ENCODE measurements at regions of chr13 and their contacts with region 1.

Region 1: DNA sequence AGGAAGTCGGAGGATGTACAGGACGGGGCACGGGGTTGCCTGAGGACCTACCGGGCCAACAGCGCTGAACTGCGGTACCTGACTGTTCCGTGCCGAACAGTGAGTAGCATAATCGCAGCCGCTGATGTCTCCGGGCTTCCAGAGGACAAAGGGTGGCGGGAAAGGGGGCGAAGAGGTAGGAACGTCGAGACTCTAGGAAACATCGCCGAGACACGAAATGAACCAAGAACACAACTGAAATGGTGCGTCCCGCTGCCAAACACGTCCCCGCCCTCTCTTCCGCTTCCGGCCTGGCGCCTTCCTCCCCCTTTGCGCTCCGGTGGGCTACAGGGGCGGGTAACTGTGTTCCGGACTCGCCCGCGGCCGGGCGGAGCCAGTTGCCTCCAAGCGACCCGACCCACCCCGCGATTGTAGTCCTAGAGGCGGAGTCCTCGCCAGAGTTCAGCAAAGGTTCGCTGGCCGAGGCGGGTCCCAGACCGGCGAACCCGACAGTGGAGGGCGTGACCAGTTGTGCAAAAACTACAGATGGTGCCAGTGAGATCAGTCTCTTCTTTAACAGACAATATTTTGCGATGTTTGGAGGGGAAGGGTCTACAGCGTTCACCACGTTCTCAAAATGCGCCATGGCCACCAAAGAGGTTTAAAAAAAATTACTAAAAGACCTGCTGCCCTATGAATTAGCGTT is at the start of gene MRPS31:
- DNase-seq: peak; percentile 88 to 98 (median 95)
- ATAC-seq: peak; percentile 94
- H3K4me3 ChIP-seq: peak within 1 kb of the TSS; percentile 89 to 92
- H3K4me3 Mint-ChIP-seq: peak within 1 kb of the TSS; percentile 99
- H3K27ac ChIP-seq: peak within 1 kb of the TSS; percentile 74 to 87
- H3K27ac Mint-ChIP-seq: peak within 1 kb of the TSS; percentile 98
- H3K4me1 ChIP-seq: peaks cover 20% of the 10 kb centered on the region
- H3K4me1 Mint-ChIP-seq: peaks cover 41% of the 10 kb centered on the region
- H3K27me3 ChIP-seq: no peaks in the 10 kb centered on the region
- H3K27me3 Mint-ChIP-seq: no peaks in the 10 kb centered on the region
- CTCF ChIP-seq: no peak
- total RNA-seq, gene MRPS31: 7.3 to 7.5 TPM

Region 2: GRCh38 chr13:40485611-40486517 is 285.2 kb before region 1 on chr13:
- CTCF ChIA-PET with region 1: no interaction called
- POLR2A ChIA-PET with region 1: no interaction called
- intact Hi-C with region 1: loop called in 1 of 2 experiments (anchors 5 kb)
- DNase-seq: peak; percentile 49 to 94 (median 73)
- ATAC-seq: peak; percentile 92
- H3K4me3 ChIP-seq: peak overlapping the region in 1 of 2 experiments; percentile 33
- H3K4me3 Mint-ChIP-seq: peak overlapping the region; percentile 43
- H3K27ac ChIP-seq: peak overlapping the region; percentile 53 to 61
- H3K27ac Mint-ChIP-seq: peak overlapping the region; percentile 93
- H3K4me1 ChIP-seq: peaks cover 92% of the 10 kb centered on the region
- H3K4me1 Mint-ChIP-seq: peaks cover 91% of the 10 kb centered on the region
- H3K27me3 ChIP-seq: no peaks in the 10 kb centered on the region
- H3K27me3 Mint-ChIP-seq: no peaks in the 10 kb centered on the region
- CTCF ChIP-seq: no peak

Region 3: GRCh38 chr13:40789275-40790133 is 18.4 kb after region 1 on chr13 and contains the start of gene SLC25A15:
- CTCF ChIA-PET with region 1: no interaction called
- POLR2A ChIA-PET with region 1: interaction called, 15 read pairs
- intact Hi-C with region 1: loop called (anchors 1 kb)
- DNase-seq: peak; percentile 37 to 87 (median 71)
- ATAC-seq: peak; percentile 86
- H3K4me3 ChIP-seq: peak within 1 kb of the TSS; percentile 63 to 74
- H3K4me3 Mint-ChIP-seq: peak within 1 kb of the TSS; percentile 84
- H3K27ac ChIP-seq: peak within 1 kb of the TSS; percentile 70 to 74
- H3K27ac Mint-ChIP-seq: peak within 1 kb of the TSS; percentile 82
- H3K4me1 ChIP-seq: peaks cover 15% of the 10 kb centered on the region
- H3K4me1 Mint-ChIP-seq: peaks cover 37% of the 10 kb centered on the region
- H3K27me3 ChIP-seq: no peaks in the 10 kb centered on the region
- H3K27me3 Mint-ChIP-seq: no peaks in the 10 kb centered on the region
- CTCF ChIP-seq: no peak
- total RNA-seq, gene SLC25A15: 5.0 to 7.5 TPM

Region 4: GRCh38 chr13:40927929-40928328 is 156.9 kb after region 1 on chr13:
- CTCF ChIA-PET with region 1: no interaction called
- POLR2A ChIA-PET with region 1: no interaction called
- intact Hi-C with region 1: no loop called
- DNase-seq: no peak
- ATAC-seq: no peak
- H3K4me3 ChIP-seq: no peak overlapping the region
- H3K4me3 Mint-ChIP-seq: no peak overlapping the region
- H3K27ac ChIP-seq: no peak overlapping the region
- H3K27ac Mint-ChIP-seq: peak overlapping the region; percentile 79
- H3K4me1 ChIP-seq: no peaks in the 10 kb centered on the region
- H3K4me1 Mint-ChIP-seq: peaks cover 21% of the 10 kb centered on the region
- H3K27me3 ChIP-seq: no peaks in the 10 kb centered on the region
- H3K27me3 Mint-ChIP-seq: no peaks in the 10 kb centered on the region
- CTCF ChIP-seq: no peak

Region 5: DNA sequence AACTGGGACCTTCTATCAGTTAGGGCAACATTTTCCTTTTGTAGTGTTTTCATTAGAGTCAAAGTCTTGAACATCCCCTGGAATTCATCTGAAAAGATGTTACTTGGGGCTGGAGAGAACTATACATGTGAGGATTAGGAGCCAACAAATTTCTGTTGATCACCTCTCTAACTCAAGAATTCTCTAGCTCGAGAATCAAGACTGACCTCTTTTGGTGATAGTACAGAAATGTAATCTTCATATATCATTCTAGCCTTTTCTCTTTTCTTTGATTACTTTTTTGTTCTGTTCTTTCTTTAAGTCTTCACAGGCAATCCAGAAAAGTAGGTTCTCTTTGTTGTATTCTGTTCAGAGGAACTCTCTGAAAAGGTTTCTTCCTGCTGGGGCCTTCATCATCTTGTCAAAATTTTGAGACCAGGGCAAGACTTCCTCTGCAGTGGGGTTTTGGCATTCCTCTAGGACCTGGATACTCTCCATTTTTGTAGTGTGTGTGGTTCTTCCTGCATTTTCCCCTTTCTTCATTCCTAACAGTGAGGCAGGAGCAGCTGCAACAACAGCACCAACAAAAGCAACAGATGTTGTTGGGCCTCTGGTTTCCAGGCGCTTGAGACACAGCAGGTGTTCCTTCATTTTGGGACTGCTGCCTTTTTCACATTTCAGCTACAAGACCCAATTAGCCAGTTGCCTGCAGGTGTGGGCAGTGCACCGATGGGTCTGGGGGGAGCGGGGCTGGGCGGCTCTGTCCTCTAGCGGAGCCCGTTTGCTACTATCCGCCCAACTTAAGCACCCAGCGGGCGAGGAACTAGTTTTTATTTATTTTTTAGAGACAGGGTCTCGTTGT is 221.8 kb after region 1 on chr13:
- CTCF ChIA-PET with region 1: no interaction called
- POLR2A ChIA-PET with region 1: no interaction called
- intact Hi-C with region 1: loop called in 1 of 2 experiments (anchors 10 kb)
- DNase-seq: peak in 2 of 9 experiments; percentile 47 to 66
- ATAC-seq: peak; percentile 52
- H3K4me3 ChIP-seq: no peak overlapping the region
- H3K4me3 Mint-ChIP-seq: peak overlapping the region; percentile 43
- H3K27ac ChIP-seq: peak overlapping the region in 1 of 2 experiments; percentile 17
- H3K27ac Mint-ChIP-seq: peak overlapping the region; percentile 86
- H3K4me1 ChIP-seq: peaks cover 88% of the 10 kb centered on the region
- H3K4me1 Mint-ChIP-seq: peaks cover 83% of the 10 kb centered on the region
- H3K27me3 ChIP-seq: no peaks in the 10 kb centered on the region
- H3K27me3 Mint-ChIP-seq: no peaks in the 10 kb centered on the region
- CTCF ChIP-seq: peak; percentile 47

Region 6: GRCh38 chr13:41193919-41194824 is 423.1 kb after region 1 on chr13 and contains the start of gene KBTBD7:
- CTCF ChIA-PET with region 1: no interaction called
- POLR2A ChIA-PET with region 1: no interaction called
- intact Hi-C with region 1: loop called in 1 of 2 experiments (anchors 10 kb)
- DNase-seq: peak; percentile 74 to 93 (median 90)
- ATAC-seq: peak; percentile 95
- H3K4me3 ChIP-seq: peak within 1 kb of the TSS; percentile 67 to 97
- H3K4me3 Mint-ChIP-seq: peak within 1 kb of the TSS; percentile 92
- H3K27ac ChIP-seq: peak within 1 kb of the TSS; percentile 53 to 68
- H3K27ac Mint-ChIP-seq: peak within 1 kb of the TSS; percentile 93
- H3K4me1 ChIP-seq: peaks cover 14% of the 10 kb centered on the region
- H3K4me1 Mint-ChIP-seq: peaks cover 39% of the 10 kb centered on the region
- H3K27me3 ChIP-seq: no peaks in the 10 kb centered on the region
- H3K27me3 Mint-ChIP-seq: no peaks in the 10 kb centered on the region
- CTCF ChIP-seq: no peak
- total RNA-seq, gene KBTBD7: 2.2 to 2.3 TPM

Region 7: GRCh38 chr13:41465241-41465847 is 694.3 kb after region 1 on chr13:
- CTCF ChIA-PET with region 1: no interaction called
- POLR2A ChIA-PET with region 1: no interaction called
- intact Hi-C with region 1: loop called in 1 of 2 experiments (anchors 10 kb)
- DNase-seq: peak; percentile 75 to 95 (median 89)
- ATAC-seq: peak; percentile 72
- H3K4me3 ChIP-seq: peak overlapping the region in 1 of 2 experiments; percentile 6
- H3K4me3 Mint-ChIP-seq: peak overlapping the region; percentile 88
- H3K27ac ChIP-seq: peak overlapping the region; percentile 82 to 91
- H3K27ac Mint-ChIP-seq: peak overlapping the region; percentile 99
- H3K4me1 ChIP-seq: peaks cover 90% of the 10 kb centered on the region
- H3K4me1 Mint-ChIP-seq: peaks cover 92% of the 10 kb centered on the region
- H3K27me3 ChIP-seq: no peaks in the 10 kb centered on the region
- H3K27me3 Mint-ChIP-seq: no peaks in the 10 kb centered on the region
- CTCF ChIP-seq: no peak